Cardiac septum (tissue), 1 donor: ENCODE measurements at regions of chr14 and their contacts with region 1.

Region 1: GRCh38 chr14:60184146-60184904 is 19.1 kb upstream of the DHRS7 start:
- DNase-seq: no peak

Region 2: GRCh38 chr14:59964251-59965007 is 219.9 kb before region 1 on chr14:
- intact Hi-C with region 1: loop called (anchors 5 kb)
- DNase-seq: no peak

Region 3: GRCh38 chr14:60064491-60065072 is 119.7 kb before region 1 on chr14:
- intact Hi-C with region 1: loop called (anchors 5 kb)
- DNase-seq: no peak